A549 (cell line): ENCODE measurements at regions of chr20 and their contacts with region 1.

Region 1: GRCh38 chr20:48620519-48621254 is 207.1 kb downstream of the PREX1 start:
- DNase-seq: peak; percentile 84 to 92
- ATAC-seq: peak; percentile 87 to 94
- H3K4me3 ChIP-seq: peak overlapping the region; percentile 42
- H3K27ac ChIP-seq: peak overlapping the region; percentile 80 to 83
- H3K4me1 ChIP-seq: peaks cover 28% of the 10 kb centered on the region
- CTCF ChIP-seq: peak; percentile 73
- EP300 ChIP-seq: no peak
- POLR2A ChIP-seq: no peak
- RAD21 ChIP-seq: peak; percentile 93 to 95

Region 2: GRCh38 chr20:47691625-47692024 is 929.1 kb before region 1 on chr20:
- CTCF ChIA-PET with region 1: interaction called, 59 read pairs
- POLR2A ChIA-PET with region 1: no interaction called
- DNase-seq: no peak
- ATAC-seq: no peak
- H3K4me3 ChIP-seq: no peak overlapping the region
- H3K27ac ChIP-seq: no peak overlapping the region
- H3K4me1 ChIP-seq: peaks cover 17% of the 10 kb centered on the region
- CTCF ChIP-seq: no peak
- EP300 ChIP-seq: no peak
- POLR2A ChIP-seq: no peak
- RAD21 ChIP-seq: no peak

Region 3: GRCh38 chr20:47778398-47779338 is 842.0 kb before region 1 on chr20:
- CTCF ChIA-PET with region 1: interaction called, 36 read pairs
- POLR2A ChIA-PET with region 1: no interaction called
- DNase-seq: no peak
- ATAC-seq: no peak
- H3K4me3 ChIP-seq: no peak overlapping the region
- H3K27ac ChIP-seq: no peak overlapping the region
- H3K4me1 ChIP-seq: 0 out of 3 replicates have a peak, but pooled peaks cover under 1% of the 10 kb centered on the region
- CTCF ChIP-seq: no peak
- EP300 ChIP-seq: no peak
- POLR2A ChIP-seq: no peak
- RAD21 ChIP-seq: no peak

Region 4: DNA sequence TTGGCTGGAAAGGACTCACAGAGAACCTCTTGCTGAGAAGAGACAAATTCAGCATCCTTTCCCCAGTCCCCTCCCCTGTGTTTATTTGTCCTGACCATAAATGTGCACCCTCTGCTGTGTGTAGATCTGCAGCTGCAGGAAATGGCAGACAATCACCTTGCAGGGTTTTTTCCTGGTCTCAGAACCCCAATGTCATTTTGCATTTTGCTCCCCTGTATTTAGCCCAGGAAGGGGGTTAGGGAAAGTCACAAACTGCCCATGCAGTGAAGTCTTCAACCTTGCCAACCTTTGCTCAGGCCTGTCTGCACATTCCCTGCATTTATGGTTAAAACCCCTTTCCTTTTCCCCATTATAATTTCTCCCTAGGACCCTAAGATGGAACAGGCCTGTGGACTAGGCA is 306.6 kb before region 1 on chr20:
- CTCF ChIA-PET with region 1: interaction called, 11 read pairs
- POLR2A ChIA-PET with region 1: no interaction called
- DNase-seq: no peak
- ATAC-seq: no peak
- H3K4me3 ChIP-seq: no peak overlapping the region
- H3K27ac ChIP-seq: no peak overlapping the region
- H3K4me1 ChIP-seq: no peaks in the 10 kb centered on the region
- CTCF ChIP-seq: no peak
- EP300 ChIP-seq: no peak
- POLR2A ChIP-seq: no peak
- RAD21 ChIP-seq: no peak

Region 5: DNA sequence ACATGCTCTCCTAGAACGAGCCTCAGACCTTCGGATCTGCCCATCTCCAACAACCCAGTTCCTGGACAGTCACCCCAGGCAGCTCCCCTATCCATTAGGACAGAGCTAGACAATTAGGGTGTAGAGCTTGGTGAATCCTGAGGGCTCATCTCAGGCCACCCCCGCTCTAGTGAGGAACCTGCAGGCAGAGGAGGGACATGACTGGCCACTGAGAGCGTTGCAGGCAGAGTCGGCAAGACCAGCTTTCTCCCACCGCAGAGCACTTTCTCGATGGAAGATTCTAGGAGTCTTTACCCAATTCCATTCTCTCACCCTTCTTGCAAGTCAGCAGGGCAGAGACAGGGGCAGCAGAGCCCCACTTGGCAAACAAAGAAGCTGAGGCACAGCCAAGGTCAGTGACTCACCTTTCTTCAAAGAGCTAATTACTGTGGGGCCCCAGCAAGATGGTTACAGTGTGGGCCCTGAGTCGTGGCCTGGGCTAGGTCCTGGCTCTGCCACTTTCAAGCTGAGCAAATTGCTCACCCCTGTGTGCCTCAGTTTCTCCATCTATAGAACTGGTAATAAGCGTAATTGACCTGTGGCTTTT is 70.0 kb before region 1 on chr20:
- CTCF ChIA-PET with region 1: interaction called, 10 read pairs
- POLR2A ChIA-PET with region 1: no interaction called
- DNase-seq: no peak
- ATAC-seq: no peak
- H3K4me3 ChIP-seq: no peak overlapping the region
- H3K27ac ChIP-seq: peak overlapping the region in 1 of 2 experiments; percentile 50; a peak in 2 of 6 replicates
- H3K4me1 ChIP-seq: peaks cover 10% of the 10 kb centered on the region
- CTCF ChIP-seq: no peak
- EP300 ChIP-seq: no peak
- POLR2A ChIP-seq: no peak
- RAD21 ChIP-seq: no peak

Region 6: GRCh38 chr20:48648550-48648951 is 27.9 kb after region 1 on chr20:
- CTCF ChIA-PET with region 1: interaction called, 11 read pairs
- POLR2A ChIA-PET with region 1: no interaction called
- DNase-seq: no peak
- ATAC-seq: no peak
- H3K4me3 ChIP-seq: no peak overlapping the region
- H3K27ac ChIP-seq: no peak overlapping the region
- H3K4me1 ChIP-seq: no peaks in the 10 kb centered on the region
- CTCF ChIP-seq: no peak
- EP300 ChIP-seq: no peak
- POLR2A ChIP-seq: no peak
- RAD21 ChIP-seq: no peak

Region 7: GRCh38 chr20:48689817-48690555 is 69.3 kb after region 1 on chr20:
- CTCF ChIA-PET with region 1: no interaction called
- POLR2A ChIA-PET with region 1: no interaction called
- DNase-seq: no peak
- ATAC-seq: no peak
- H3K4me3 ChIP-seq: no peak overlapping the region
- H3K27ac ChIP-seq: no peak overlapping the region
- H3K4me1 ChIP-seq: 0 out of 3 replicates have a peak, but pooled peaks cover 4% of the 10 kb centered on the region
- CTCF ChIP-seq: no peak
- EP300 ChIP-seq: no peak
- POLR2A ChIP-seq: no peak
- RAD21 ChIP-seq: no peak

Region 8: GRCh38 chr20:48760403-48760983 is 139.8 kb after region 1 on chr20:
- CTCF ChIA-PET with region 1: no interaction called
- POLR2A ChIA-PET with region 1: no interaction called
- DNase-seq: no peak
- ATAC-seq: peak; percentile 30 to 36; a peak in 3 of 6 replicates
- H3K4me3 ChIP-seq: no peak overlapping the region
- H3K27ac ChIP-seq: peak overlapping the region in 1 of 2 experiments; percentile 66; a peak in 3 of 6 replicates
- H3K4me1 ChIP-seq: peaks cover 10% of the 10 kb centered on the region
- CTCF ChIP-seq: no peak
- EP300 ChIP-seq: no peak
- POLR2A ChIP-seq: no peak
- RAD21 ChIP-seq: no peak